ENCODE measurements at regions of chr4 and their contacts with region 1.

Region 1: DNA sequence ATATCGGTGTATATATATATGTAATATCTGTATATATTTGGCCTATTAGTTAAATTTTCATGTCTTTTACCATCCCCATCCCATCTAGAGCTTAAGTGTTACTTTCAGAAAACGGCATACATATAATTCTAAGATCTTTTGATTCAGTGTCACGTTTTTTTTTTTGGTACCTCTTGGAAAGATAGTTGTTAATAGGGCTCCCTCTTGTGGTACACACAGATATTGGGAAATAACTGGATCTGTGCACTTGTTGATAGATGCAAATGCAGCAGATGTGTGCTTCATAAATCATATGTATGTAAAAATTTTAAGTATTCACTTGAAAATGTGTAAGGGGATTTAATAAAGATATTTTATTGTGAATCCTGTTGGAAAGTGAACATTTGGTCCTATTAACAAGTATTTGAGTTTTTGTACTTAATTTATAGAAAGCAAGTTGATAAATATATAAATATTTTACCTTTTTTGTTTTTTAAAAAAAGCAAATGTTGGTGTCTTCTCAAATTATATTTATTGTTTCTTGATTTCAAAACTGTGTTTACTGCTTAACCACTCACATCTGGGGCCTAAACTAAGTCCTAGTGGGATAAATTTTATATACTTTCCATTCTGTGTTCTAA is 74.7 kb downstream of the PAQR3 start:
- DNase-seq: no peak
- H3K4me3 ChIP-seq: no peak overlapping the region
- H3K27ac ChIP-seq: no peak overlapping the region
- H3K27me3 ChIP-seq: no peaks in the 10 kb centered on the region
- CTCF ChIP-seq: peak; percentile 68 to 96 (median 88)

Region 2: GRCh38 chr4:77959566-77960338 is 904.8 kb before region 1 on chr4:
- intact Hi-C with region 1: loop called in 1 of 2 experiments (anchors 10 kb)
- DNase-seq: no peak
- H3K4me3 ChIP-seq: peak overlapping the region in 53 of 59 donors; percentile 7 to 59 (median 38)
- H3K27ac ChIP-seq: no peak overlapping the region
- H3K27me3 ChIP-seq: no peaks in the 10 kb centered on the region
- CTCF ChIP-seq: peak; percentile 52 to 85 (median 70)

Region 3: GRCh38 chr4:78592104-78592783 is 272.3 kb before region 1 on chr4:
- intact Hi-C with region 1: no loop called
- DNase-seq: no peak
- H3K4me3 ChIP-seq: no peak overlapping the region
- H3K27ac ChIP-seq: no peak overlapping the region
- H3K27me3 ChIP-seq: peaks cover 0 to 2% (median 0%) of the 10 kb centered on the region in 45 donors
- CTCF ChIP-seq: peak in 6 of 56 donors; percentile 11 to 21 (median 16)

Region 4: GRCh38 chr4:78612398-78613178 is 251.9 kb before region 1 on chr4:
- intact Hi-C with region 1: loop called (anchors 2 to 10 kb)
- DNase-seq: peak in 1 of 10 donors; percentile 29
- H3K4me3 ChIP-seq: no peak overlapping the region
- H3K27ac ChIP-seq: no peak overlapping the region
- H3K27me3 ChIP-seq: peaks cover 0 to 4% (median 0%) of the 10 kb centered on the region in 45 donors
- CTCF ChIP-seq: peak; percentile 41 to 85 (median 68)

Region 5: DNA sequence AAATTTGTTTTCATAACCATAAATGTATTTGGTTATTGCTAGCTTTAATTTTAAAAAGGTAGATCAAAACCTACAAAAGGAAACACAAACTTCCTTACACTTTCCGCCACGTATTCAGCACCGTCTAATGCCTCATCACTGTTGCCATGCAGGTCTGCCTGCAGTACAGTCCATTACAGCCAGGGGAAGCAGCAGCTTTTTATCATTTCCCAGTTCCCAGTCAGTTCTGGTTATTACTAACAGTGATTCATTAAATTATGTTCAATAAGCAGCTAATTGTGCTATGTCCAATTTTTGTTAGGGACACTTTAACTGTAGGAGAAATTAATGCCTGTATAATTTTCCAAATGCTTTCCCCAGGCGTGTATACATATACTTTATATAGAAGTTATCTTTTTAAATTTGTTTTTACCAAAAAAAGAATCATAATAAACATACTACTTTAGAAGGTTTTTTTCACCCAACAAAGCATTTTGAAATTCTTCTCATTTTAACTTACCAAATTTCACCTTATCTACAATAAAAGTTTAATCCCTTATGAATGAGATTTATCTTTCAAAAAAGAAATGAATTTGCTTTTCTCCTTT is 219.7 kb before region 1 on chr4:
- intact Hi-C with region 1: loop called in 1 of 2 experiments (anchors 10 kb)
- DNase-seq: peak in 4 of 10 donors; percentile 33 to 63 (median 52)
- H3K4me3 ChIP-seq: peak overlapping the region in 2 of 59 donors; percentile 3 to 35
- H3K27ac ChIP-seq: peak overlapping the region in 52 of 59 donors; percentile 0 to 92 (median 78)
- H3K27me3 ChIP-seq: no peaks in the 10 kb centered on the region
- CTCF ChIP-seq: peak; percentile 60 to 97 (median 88)

Region 6: GRCh38 chr4:79083406-79084010 is 219.0 kb after region 1 on chr4:
- intact Hi-C with region 1: no loop called
- DNase-seq: no peak
- H3K4me3 ChIP-seq: no peak overlapping the region
- H3K27ac ChIP-seq: peak overlapping the region in 1 of 59 donors; percentile 20
- H3K27me3 ChIP-seq: no peaks in the 10 kb centered on the region
- CTCF ChIP-seq: no peak